Activated T-helper 2 cell treated with anti-CD3 and anti-CD28 coated beads, Interferon-gamma antibody, Interleukin-2, Interleukin-4, amounts not matched to agents 10 μg/mL and 5 μg/mL and 100 μg/mL, durations not matched to agents 14 hours and 24 hours and 36 hours (primary cell): ENCODE measurements at regions of chr12 and their contacts with region 1.

Region 1: GRCh38 chr12:129971721-129972120 is 67.9 kb upstream of the TMEM132D start:
- DNase-seq: no peak
- H3K4me3 Mint-ChIP-seq: no peak overlapping the region
- H3K27ac Mint-ChIP-seq: no peak overlapping the region
- H3K4me1 Mint-ChIP-seq: no peaks in the 10 kb centered on the region
- H3K27me3 Mint-ChIP-seq: no peaks in the 10 kb centered on the region

Region 2: GRCh38 chr12:128652136-128652751 is 1319.5 kb before region 1 on chr12:
- intact Hi-C with region 1: loop called (anchors 5 kb)
- DNase-seq: no peak
- H3K4me3 Mint-ChIP-seq: no peak overlapping the region
- H3K27ac Mint-ChIP-seq: no peak overlapping the region
- H3K4me1 Mint-ChIP-seq: no peaks in the 10 kb centered on the region
- H3K27me3 Mint-ChIP-seq: no peaks in the 10 kb centered on the region

Region 3: DNA sequence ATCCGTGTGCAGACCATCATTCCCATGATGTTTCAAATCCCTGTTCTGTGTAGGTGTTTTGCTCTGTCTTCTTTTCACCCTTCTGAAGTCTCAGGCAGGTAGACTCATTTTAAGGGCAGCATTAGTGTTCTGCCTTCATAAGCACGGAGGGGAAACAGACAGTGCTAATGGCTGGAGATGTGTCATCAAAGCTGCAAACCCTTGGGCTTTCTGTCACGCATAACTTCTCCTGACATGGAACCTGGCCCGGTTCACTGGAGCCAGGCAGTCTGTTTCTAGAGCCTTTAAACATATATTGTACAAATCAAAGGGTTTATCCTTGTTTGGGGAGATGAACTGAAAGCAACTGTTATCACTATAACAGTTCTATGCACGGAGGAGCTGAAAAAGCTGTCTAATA is 209.3 kb before region 1 on chr12:
- intact Hi-C with region 1: no loop called
- DNase-seq: no peak
- H3K4me3 Mint-ChIP-seq: no peak overlapping the region
- H3K27ac Mint-ChIP-seq: no peak overlapping the region
- H3K4me1 Mint-ChIP-seq: no peaks in the 10 kb centered on the region
- H3K27me3 Mint-ChIP-seq: no peaks in the 10 kb centered on the region

Region 4: GRCh38 chr12:129903092-129903945 is 68.4 kb before region 1 on chr12:
- intact Hi-C with region 1: no loop called
- DNase-seq: no peak
- H3K4me3 Mint-ChIP-seq: no peak overlapping the region
- H3K27ac Mint-ChIP-seq: no peak overlapping the region
- H3K4me1 Mint-ChIP-seq: no peaks in the 10 kb centered on the region
- H3K27me3 Mint-ChIP-seq: peaks cover 30% of the 10 kb centered on the region